Mucosa of descending colon (tissue), 3 donors: ENCODE measurements at regions of chr18 and their contacts with region 1.

Region 1: GRCh38 chr18:955379-956066 is 50.9 kb downstream of the ADCYAP1 start:
- DNase-seq: no peak
- ATAC-seq: no peak
- H3K4me3 ChIP-seq: no peak overlapping the region
- H3K4me1 ChIP-seq: no peaks in the 10 kb centered on the region
- CTCF ChIP-seq: no peak

Region 2: GRCh38 chr18:732371-732770 is 223.2 kb before region 1 on chr18:
- intact Hi-C with region 1: no loop called
- DNase-seq: no peak
- ATAC-seq: no peak
- H3K4me3 ChIP-seq: no peak overlapping the region
- H3K4me1 ChIP-seq: no peaks in the 10 kb centered on the region
- CTCF ChIP-seq: no peak

Region 3: GRCh38 chr18:864872-865273 is 90.7 kb before region 1 on chr18:
- intact Hi-C with region 1: loop called in 1 of 2 experiments (anchors 5 kb)
- DNase-seq: peak; percentile 54 to 65 (median 57)
- ATAC-seq: peak; percentile 84
- H3K4me3 ChIP-seq: no peak overlapping the region
- H3K4me1 ChIP-seq: no peaks in the 10 kb centered on the region
- CTCF ChIP-seq: peak; percentile 89